Mammary epithelial cell (primary cell): ENCODE measurements at regions of chr6 and their contacts with region 1.

Region 1: GRCh38 chr6:70884074-70884983 is 72.5 kb downstream of the B3GAT2 start:
- DNase-seq: peak; percentile 20
- H3K4me3 ChIP-seq: no peak overlapping the region
- H3K27ac ChIP-seq: no peak overlapping the region
- H3K4me1 ChIP-seq: no peaks in the 10 kb centered on the region
- H3K27me3 ChIP-seq: peaks cover 19% of the 10 kb centered on the region
- CTCF ChIP-seq: peak; percentile 75 to 87

Region 2: DNA sequence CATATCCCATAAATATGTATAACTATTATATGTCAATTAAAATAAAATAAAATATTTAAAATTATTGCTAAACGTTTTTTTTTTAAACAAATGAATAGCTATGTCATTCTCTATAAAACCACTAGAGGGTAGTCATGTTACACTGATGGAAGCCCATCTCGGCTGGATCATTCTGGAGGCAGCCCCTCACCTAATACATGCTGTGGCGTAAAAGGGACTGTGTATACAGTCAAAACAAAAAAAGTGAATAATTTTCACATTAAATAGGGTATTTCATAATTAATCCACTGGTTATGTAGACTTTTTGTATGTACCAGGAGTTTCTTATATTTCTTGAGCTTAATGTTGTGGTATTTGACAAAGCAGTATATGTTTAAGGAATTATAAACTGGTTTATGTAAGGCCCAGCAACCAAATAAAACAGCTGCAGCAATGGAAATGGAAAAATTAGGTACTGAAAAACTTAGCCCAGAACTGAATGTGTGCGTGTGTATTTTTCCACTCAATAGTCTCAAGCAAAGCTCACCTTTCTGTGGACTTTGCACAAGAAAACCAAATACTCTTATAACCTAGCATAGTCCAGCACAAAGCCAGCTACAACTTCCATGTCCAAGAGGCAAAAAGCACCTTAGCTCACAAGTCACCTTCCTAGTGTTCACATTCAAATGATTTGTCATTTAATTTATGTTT is 663.2 kb before region 1 on chr6:
- CTCF ChIA-PET with region 1: no interaction called
- dilution Hi-C with region 1: no loop called
- in situ Hi-C with region 1: no loop called
- intact Hi-C with region 1: loop called (anchors 1 kb)
- DNase-seq: no peak
- H3K4me3 ChIP-seq: no peak overlapping the region
- H3K27ac ChIP-seq: no peak overlapping the region
- H3K4me1 ChIP-seq: no peaks in the 10 kb centered on the region
- H3K27me3 ChIP-seq: peaks cover 17% of the 10 kb centered on the region
- CTCF ChIP-seq: peak; percentile 57 to 64

Region 3: GRCh38 chr6:70304616-70305015 is 579.7 kb before region 1 on chr6:
- CTCF ChIA-PET with region 1: no interaction called
- dilution Hi-C with region 1: no loop called
- in situ Hi-C with region 1: loop called in 1 of 2 experiments (anchors 10 kb)
- intact Hi-C with region 1: no loop called
- DNase-seq: no peak
- H3K4me3 ChIP-seq: no peak overlapping the region
- H3K27ac ChIP-seq: no peak overlapping the region
- H3K4me1 ChIP-seq: no peaks in the 10 kb centered on the region
- H3K27me3 ChIP-seq: peaks cover 51% of the 10 kb centered on the region
- CTCF ChIP-seq: no peak

Region 4: DNA sequence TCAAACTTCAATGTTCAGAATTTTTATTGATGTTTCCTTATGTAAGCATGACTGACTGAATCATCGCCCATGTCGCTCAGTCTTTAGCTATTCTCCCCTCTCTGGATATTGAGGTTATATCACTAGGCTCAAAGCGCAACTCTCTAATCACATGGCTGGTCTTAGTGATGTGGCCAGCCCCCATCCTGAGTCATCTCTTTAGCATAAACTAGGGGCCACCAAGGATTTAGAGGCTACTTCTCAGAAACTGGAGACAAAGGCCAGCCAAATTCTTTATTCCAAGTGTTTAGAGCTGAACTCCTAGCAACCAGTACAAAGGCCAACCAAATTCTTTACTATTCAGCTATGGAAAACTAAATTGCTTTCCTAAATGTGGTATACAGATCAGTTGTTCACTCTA is 409.6 kb before region 1 on chr6:
- CTCF ChIA-PET with region 1: no interaction called
- dilution Hi-C with region 1: no loop called
- in situ Hi-C with region 1: no loop called
- intact Hi-C with region 1: no loop called
- DNase-seq: no peak
- H3K4me3 ChIP-seq: no peak overlapping the region
- H3K27ac ChIP-seq: no peak overlapping the region
- H3K4me1 ChIP-seq: no peaks in the 10 kb centered on the region
- H3K27me3 ChIP-seq: no peaks in the 10 kb centered on the region
- CTCF ChIP-seq: no peak

Region 5: DNA sequence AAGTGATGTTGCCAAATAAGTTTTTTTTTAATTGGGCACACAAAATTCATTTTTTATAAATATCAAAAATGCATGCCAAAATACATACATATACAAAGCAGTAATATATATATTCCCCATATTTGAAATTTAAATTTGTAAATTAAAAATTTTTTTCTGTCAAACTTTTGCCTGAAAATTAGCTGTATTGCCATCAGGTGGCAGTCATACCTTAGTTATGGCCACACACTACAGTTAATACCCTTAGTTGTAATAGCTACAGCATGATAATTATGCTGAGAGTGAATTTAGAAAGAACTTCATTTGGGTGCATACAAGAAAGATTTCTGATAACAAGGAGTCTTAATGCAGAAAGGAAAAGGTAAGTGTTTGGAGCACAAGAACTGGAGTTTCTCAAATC is 363.8 kb before region 1 on chr6:
- CTCF ChIA-PET with region 1: no interaction called
- dilution Hi-C with region 1: no loop called
- in situ Hi-C with region 1: no loop called
- intact Hi-C with region 1: loop called (anchors 1 kb)
- DNase-seq: no peak
- H3K4me3 ChIP-seq: no peak overlapping the region
- H3K27ac ChIP-seq: no peak overlapping the region
- H3K4me1 ChIP-seq: no peaks in the 10 kb centered on the region
- H3K27me3 ChIP-seq: no peaks in the 10 kb centered on the region
- CTCF ChIP-seq: peak in 1 of 2 donors; percentile 34

Region 6: GRCh38 chr6:70706491-70707123 is 177.7 kb before region 1 on chr6:
- CTCF ChIA-PET with region 1: no interaction called
- dilution Hi-C with region 1: no loop called
- in situ Hi-C with region 1: loop called (anchors 5 to 10 kb)
- intact Hi-C with region 1: loop called (anchors 1 kb)
- DNase-seq: peak; percentile 10
- H3K4me3 ChIP-seq: no peak overlapping the region
- H3K27ac ChIP-seq: no peak overlapping the region
- H3K4me1 ChIP-seq: no peaks in the 10 kb centered on the region
- H3K27me3 ChIP-seq: no peaks in the 10 kb centered on the region
- CTCF ChIP-seq: peak; percentile 46 to 53